Heart left ventricle (tissue), 16 donors: ENCODE measurements at regions of chr16 and their contacts with region 1.

Region 1: DNA sequence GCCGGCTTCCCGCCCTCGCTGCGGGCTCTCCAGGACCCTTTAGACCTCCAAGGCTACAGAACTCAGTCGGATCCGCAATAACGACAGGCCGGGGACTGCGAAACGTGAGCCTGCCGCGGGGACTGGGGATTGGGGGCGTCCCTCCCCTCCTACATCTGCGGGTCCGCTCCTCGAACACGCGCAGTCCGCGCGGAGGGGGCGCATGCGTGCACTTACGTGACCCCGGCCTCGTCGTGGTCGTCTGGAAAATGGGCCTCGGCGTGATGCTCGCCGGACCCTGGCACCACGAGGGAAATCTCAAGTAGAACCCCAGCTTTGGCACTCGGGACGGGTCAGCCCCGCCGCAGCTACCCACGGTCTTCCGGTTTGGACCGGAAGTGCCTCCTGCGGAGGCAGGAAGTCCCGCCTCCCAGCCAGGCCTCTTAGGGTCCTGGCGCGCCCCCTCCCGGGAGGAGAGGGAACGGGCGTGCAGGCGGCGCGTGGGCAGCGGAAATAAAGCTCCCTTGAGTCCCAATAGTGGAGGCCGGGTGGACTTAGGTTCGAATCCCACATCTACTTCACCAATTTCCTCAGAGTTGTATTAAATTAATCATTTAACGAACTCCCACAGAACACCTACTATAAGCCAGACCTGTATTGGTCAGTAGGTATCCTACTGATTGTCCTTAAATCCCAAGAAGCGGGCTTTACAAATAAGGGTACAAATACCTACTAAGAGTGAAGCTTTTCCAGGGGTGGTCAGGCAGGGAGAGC is at the start of gene TAF1C:
- DNase-seq: peak; percentile 90 to 95 (median 92)
- ATAC-seq: peak; percentile 82 to 95 (median 94)
- H3K4me3 ChIP-seq: peak within 1 kb of the TSS; percentile 62 to 100 (median 87)
- H3K27ac ChIP-seq: peak within 1 kb of the TSS; percentile 56 to 90 (median 82)
- H3K4me1 ChIP-seq: peaks cover 0 to 45% (median 16%) of the 10 kb centered on the region in 12 donors
- H3K27me3 ChIP-seq: no peaks in the 10 kb centered on the region
- CTCF ChIP-seq: peak in 11 of 12 donors; percentile 92 to 99 (median 98)
- POLR2A ChIP-seq: peak in 1 of 2 donors; percentile 46
- total RNA-seq, gene TAF1C: 16.3 to 24.3 (median 21.8) TPM

Region 2: GRCh38 chr16:84116720-84117493 is 70.0 kb before region 1 on chr16 and contains the start of gene MBTPS1:
- intact Hi-C with region 1: loop called in 3 of 10 experiments (anchors 2 to 5 kb)
- DNase-seq: peak; percentile 99 to 100 (median 99)
- ATAC-seq: peak; percentile 97 to 99 (median 98)
- H3K4me3 ChIP-seq: peak within 1 kb of the TSS; percentile 49 to 100 (median 84)
- H3K27ac ChIP-seq: peak within 1 kb of the TSS; percentile 80 to 99 (median 92)
- H3K4me1 ChIP-seq: peaks cover 0 to 29% (median 19%) of the 10 kb centered on the region in 12 donors
- H3K27me3 ChIP-seq: no peaks in the 10 kb centered on the region
- CTCF ChIP-seq: peak in 2 of 12 donors; percentile 1 to 4
- POLR2A ChIP-seq: peak in 1 of 2 donors; percentile 91
- total RNA-seq, gene MBTPS1: 57.3 to 91.4 (median 68.6) TPM

Region 3: GRCh38 chr16:84144859-84145639 is 41.8 kb before region 1 on chr16 and contains the starts of genes DNAAF1 and HSDL1:
- intact Hi-C with region 1: loop called in 7 of 10 experiments (anchors 2 to 5 kb)
- DNase-seq: peak; percentile 90 to 96 (median 91)
- ATAC-seq: peak; percentile 84 to 96 (median 94)
- H3K4me3 ChIP-seq: peak within 1 kb of the TSS; percentile 78 to 99 (median 94)
- H3K27ac ChIP-seq: peak within 1 kb of the TSS; percentile 50 to 96 (median 80)
- H3K4me1 ChIP-seq: peaks cover 0 to 26% (median 10%) of the 10 kb centered on the region in 12 donors
- H3K27me3 ChIP-seq: peaks cover 0 to 2% (median 0%) of the 10 kb centered on the region in 9 donors
- CTCF ChIP-seq: peak in 4 of 12 donors; percentile 3 to 28 (median 15)
- POLR2A ChIP-seq: peak; percentile 76 to 82
- total RNA-seq, gene DNAAF1: 0.20 to 0.32 (median 0.25) TPM in 3 of 9 donors, not detected in the others
- total RNA-seq, gene HSDL1: 15.8 to 46.8 (median 23.4) TPM